Activated CD8-positive, alpha-beta T cell treated with anti-CD3 and anti-CD28 coated beads for 36 hours (primary cell): ENCODE measurements at regions of chr17 and their contacts with region 1.

Region 1: GRCh38 chr17:8189711-8190477 is at the start of gene BORCS6:
- DNase-seq: peak; percentile 98
- ATAC-seq: peak; percentile 67
- H3K4me3 Mint-ChIP-seq: no peak within 1 kb of the TSS
- H3K27ac Mint-ChIP-seq: peak within 1 kb of the TSS; percentile 90
- H3K4me1 Mint-ChIP-seq: peaks cover 10% of the 10 kb centered on the region
- H3K27me3 Mint-ChIP-seq: no peaks in the 10 kb centered on the region
- CTCF ChIP-seq: no peak
- total RNA-seq, gene BORCS6: 5.5 to 6.2 TPM

Region 2: DNA sequence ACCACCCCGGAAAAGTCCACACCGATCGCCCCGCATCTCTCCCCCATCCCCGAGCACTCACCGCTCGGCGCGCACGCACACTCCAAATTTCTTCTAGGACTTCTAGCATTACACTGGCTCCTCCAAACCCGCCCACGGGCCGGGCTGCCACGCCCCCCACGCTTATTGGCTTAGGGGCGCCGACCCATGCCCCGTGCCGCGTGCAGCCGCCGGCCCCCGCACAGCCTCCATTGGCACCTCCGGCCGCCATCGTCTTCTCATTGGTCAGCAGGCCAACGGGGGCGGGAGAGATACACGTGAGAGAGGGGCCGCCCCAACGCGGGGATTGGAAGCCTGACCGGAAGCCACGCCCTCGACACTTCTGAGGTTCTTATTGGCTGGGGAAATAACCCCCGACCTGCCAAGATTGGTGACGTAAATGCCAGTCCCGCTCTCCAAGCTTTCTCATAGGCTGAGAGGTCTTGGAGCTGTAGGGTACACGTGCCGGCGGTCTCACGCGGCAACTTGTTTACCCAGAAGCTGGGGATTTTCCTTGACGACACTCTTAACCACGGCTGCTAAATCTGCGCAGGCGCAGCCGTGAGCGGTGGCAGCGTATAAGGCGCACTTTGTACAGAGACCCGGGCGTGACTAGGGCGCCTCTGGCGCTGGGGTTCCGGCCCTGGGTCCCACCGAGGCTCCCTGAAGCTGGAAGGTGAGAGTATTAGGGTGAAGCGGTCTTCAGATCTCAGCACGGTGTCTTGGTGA is 33.5 kb before region 1 on chr17:
- CTCF ChIA-PET with region 1: interaction called, 22 read pairs
- POLR2A ChIA-PET with region 1: interaction called, 13 read pairs
- intact Hi-C with region 1: no loop called
- DNase-seq: peak; percentile 100
- ATAC-seq: peak; percentile 73
- H3K4me3 Mint-ChIP-seq: no peak overlapping the region
- H3K27ac Mint-ChIP-seq: no peak overlapping the region
- H3K4me1 Mint-ChIP-seq: peaks cover 59% of the 10 kb centered on the region
- H3K27me3 Mint-ChIP-seq: no peaks in the 10 kb centered on the region
- CTCF ChIP-seq: no peak

Region 3: DNA sequence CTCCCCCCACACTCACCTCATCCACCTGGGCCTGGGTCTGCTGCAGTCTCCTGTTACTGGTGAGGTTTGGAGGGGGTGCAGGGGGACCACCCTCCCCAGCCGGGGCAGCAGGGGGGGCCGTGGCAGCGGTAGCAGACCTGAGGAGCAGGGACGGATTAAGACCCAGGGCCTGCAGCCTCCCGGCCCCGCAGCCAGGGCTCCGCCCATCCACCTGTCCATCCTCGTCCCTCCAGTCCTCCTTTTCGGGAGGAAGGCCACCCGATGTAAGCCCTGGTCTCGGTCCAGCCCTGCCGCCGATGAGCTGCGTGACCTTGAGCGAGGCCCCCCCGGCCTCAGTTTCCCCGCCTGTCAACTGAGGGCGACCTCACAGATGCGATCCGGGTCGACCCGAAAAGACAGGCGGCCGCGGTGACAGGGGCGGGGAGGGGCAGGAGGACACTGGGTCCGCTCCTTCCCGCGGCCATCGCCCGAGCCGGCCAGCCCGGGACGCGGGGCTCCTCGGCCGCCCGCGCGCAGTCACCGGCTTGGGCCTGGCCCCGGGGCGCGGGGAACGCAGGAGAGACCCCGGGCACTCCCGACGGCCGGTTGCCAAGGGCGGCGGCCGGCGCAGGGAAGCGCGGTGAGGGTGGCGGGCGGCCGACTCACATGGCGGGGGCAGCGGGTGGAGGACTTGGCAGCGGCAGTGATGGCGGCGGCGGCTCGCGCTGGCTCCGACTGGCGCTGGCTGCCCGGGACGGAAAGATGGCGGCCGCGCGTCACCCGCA is 27.5 kb before region 1 on chr17 and contains the start of gene VAMP2:
- CTCF ChIA-PET with region 1: interaction called, 22 read pairs
- POLR2A ChIA-PET with region 1: interaction called, 13 read pairs
- intact Hi-C with region 1: no loop called
- DNase-seq: peak; percentile 86
- ATAC-seq: peak; percentile 32
- H3K4me3 Mint-ChIP-seq: peak within 1 kb of the TSS; percentile 88
- H3K27ac Mint-ChIP-seq: peak within 1 kb of the TSS; percentile 99
- H3K4me1 Mint-ChIP-seq: peaks cover 57% of the 10 kb centered on the region
- H3K27me3 Mint-ChIP-seq: no peaks in the 10 kb centered on the region
- CTCF ChIP-seq: no peak
- total RNA-seq, gene VAMP2: 30.0 to 33.7 TPM

Region 4: DNA sequence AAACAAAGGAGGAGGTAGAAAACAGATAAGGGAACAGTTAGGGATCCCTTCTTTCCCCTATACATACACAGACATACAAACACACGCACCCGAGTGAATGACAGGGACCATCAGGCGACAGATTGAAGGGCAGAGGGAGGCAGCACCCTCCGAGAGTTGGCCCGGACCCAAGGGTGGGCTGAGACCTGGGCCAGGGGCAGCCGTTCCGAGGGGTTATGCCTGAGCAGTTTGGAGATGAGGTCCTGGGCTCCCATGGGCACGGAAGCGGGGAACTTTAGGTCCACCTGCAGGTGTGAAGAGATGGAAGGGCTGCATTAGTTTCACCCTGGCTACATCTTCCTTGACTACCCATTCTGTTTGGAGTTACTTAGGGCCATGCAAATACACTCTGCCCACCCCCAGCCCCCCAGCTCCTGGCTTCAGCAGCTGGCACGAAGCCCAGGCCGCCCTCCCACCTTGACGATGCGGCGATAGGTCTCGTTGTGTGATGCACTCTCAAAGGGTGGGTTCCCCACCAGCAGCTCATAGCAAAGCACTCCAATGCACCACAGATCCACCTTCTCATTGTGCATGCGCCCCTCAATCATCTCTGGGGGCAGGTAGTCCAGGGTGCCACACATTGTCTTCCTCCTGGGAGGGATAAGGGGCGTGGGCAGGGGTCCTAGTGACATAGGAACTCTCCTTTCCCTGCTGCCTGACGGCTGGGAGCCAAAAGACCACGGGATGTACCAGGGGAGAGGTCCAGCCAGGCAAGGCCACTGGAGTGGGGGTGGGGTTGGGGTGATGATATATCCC is 15.1 kb after region 1 on chr17:
- CTCF ChIA-PET with region 1: interaction called, 28 read pairs
- POLR2A ChIA-PET with region 1: interaction called, 186 read pairs
- intact Hi-C with region 1: no loop called
- DNase-seq: no peak
- ATAC-seq: no peak
- H3K4me3 Mint-ChIP-seq: no peak overlapping the region
- H3K27ac Mint-ChIP-seq: no peak overlapping the region
- H3K4me1 Mint-ChIP-seq: peaks cover 16% of the 10 kb centered on the region
- H3K27me3 Mint-ChIP-seq: no peaks in the 10 kb centered on the region
- CTCF ChIP-seq: no peak

Region 5: GRCh38 chr17:8209909-8210760 is 20.2 kb after region 1 on chr17 and contains the start of gene AURKB:
- CTCF ChIA-PET with region 1: interaction called, 3 read pairs
- POLR2A ChIA-PET with region 1: interaction called, 186 read pairs
- intact Hi-C with region 1: no loop called
- DNase-seq: peak; percentile 97
- ATAC-seq: peak; percentile 96
- H3K4me3 Mint-ChIP-seq: peak within 1 kb of the TSS; percentile 91
- H3K27ac Mint-ChIP-seq: peak within 1 kb of the TSS; percentile 96
- H3K4me1 Mint-ChIP-seq: peaks cover 12% of the 10 kb centered on the region
- H3K27me3 Mint-ChIP-seq: no peaks in the 10 kb centered on the region
- CTCF ChIP-seq: no peak
- total RNA-seq, gene AURKB: 170 to 174 TPM

Region 6: DNA sequence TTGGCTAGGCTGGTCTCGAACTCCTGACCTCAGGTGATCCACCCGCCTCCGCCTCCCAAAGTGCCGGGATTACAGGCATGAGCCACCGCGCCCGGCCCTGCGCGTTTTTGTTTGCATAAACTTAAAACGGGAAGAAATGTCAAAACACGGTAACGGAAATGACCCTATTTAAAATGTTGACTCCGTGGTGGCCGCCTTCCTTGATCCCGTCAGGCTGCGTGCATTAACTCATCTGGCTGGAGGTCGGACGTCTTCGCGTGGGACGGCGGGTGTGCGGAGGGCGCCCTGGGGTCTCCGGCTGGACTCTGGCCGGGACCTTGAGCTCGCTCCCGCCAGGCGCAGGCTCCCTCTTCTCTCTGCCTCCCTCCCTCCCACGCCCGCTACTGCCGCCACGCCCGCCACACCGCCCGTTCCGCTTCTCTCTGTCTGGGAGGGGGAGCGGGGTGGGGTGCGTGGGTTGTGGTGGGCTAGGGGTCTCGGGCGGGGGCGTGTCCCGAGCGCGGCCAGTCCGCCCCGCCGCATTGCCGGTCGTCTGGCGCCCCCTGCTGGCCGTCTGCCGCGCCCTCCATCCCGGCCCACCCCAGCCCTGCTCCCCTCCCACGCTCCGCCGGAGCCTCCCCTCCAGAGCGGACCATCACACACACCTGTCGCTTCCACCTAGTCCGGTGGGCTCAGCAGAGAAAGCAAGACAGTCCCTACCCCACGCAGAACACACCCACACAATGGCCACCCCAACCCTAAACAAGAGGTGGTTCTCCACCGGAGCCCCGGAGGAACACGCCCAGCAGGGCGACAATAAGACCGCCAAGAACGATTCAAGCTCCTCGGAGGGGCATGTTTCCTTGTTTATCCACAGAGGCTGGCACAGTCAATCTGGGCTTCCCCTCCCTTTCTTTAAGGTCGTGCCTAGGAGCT is 555.9 kb after region 1 on chr17:
- CTCF ChIA-PET with region 1: no interaction called
- POLR2A ChIA-PET with region 1: no interaction called
- intact Hi-C with region 1: no loop called
- DNase-seq: peak; percentile 83
- ATAC-seq: peak; percentile 74
- H3K4me3 Mint-ChIP-seq: peak overlapping the region; percentile 82
- H3K27ac Mint-ChIP-seq: peak overlapping the region; percentile 88
- H3K4me1 Mint-ChIP-seq: peaks cover 12% of the 10 kb centered on the region
- H3K27me3 Mint-ChIP-seq: no peaks in the 10 kb centered on the region
- CTCF ChIP-seq: peak; percentile 99